B cell (primary cell): ENCODE measurements at regions of chr2 and their contacts with region 1.

Region 1: GRCh38 chr2:97935719-97936161 is 60.0 kb downstream of the TMEM131 start:
- DNase-seq: no peak
- ATAC-seq: no peak
- H3K4me3 ChIP-seq: no peak overlapping the region
- H3K4me3 Mint-ChIP-seq: peak overlapping the region; percentile 66
- H3K27ac ChIP-seq: peak overlapping the region; percentile 2 to 70
- H3K27ac Mint-ChIP-seq: peak overlapping the region; percentile 64
- H3K4me1 ChIP-seq: peaks cover 52 to 64% of the 10 kb centered on the region in 2 donors
- H3K4me1 Mint-ChIP-seq: peaks cover 91% of the 10 kb centered on the region
- H3K27me3 ChIP-seq: no peaks in the 10 kb centered on the region
- H3K27me3 Mint-ChIP-seq: no peaks in the 10 kb centered on the region
- CTCF ChIP-seq: no peak

Region 2: DNA sequence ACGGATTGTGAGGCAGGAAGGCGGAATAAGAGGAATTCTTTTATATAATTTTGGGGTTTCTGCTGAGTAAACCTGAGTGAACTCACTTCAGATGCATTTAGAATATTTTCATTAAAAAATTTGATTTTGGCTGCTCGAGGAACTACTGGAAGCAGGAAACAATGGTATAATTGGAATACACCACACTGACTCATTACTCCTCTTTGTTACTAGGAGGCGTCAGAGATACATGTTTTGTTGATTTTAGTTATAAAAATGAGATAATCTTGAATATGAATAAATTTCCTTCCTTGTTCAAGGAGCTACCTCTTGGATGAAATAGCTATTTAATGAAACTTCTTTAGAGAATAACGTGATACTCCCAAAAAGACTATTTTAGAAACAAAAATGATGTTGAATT is 725.4 kb before region 1 on chr2:
- CTCF ChIA-PET with region 1: no interaction called
- POLR2A ChIA-PET with region 1: no interaction called
- intact Hi-C with region 1: no loop called
- DNase-seq: no peak
- ATAC-seq: no peak
- H3K4me3 ChIP-seq: no peak overlapping the region
- H3K4me3 Mint-ChIP-seq: no peak overlapping the region
- H3K27ac ChIP-seq: no peak overlapping the region
- H3K27ac Mint-ChIP-seq: no peak overlapping the region
- H3K4me1 ChIP-seq: no peaks in the 10 kb centered on the region
- H3K4me1 Mint-ChIP-seq: no peaks in the 10 kb centered on the region
- H3K27me3 ChIP-seq: no peaks in the 10 kb centered on the region
- H3K27me3 Mint-ChIP-seq: no peaks in the 10 kb centered on the region
- CTCF ChIP-seq: no peak

Region 3: DNA sequence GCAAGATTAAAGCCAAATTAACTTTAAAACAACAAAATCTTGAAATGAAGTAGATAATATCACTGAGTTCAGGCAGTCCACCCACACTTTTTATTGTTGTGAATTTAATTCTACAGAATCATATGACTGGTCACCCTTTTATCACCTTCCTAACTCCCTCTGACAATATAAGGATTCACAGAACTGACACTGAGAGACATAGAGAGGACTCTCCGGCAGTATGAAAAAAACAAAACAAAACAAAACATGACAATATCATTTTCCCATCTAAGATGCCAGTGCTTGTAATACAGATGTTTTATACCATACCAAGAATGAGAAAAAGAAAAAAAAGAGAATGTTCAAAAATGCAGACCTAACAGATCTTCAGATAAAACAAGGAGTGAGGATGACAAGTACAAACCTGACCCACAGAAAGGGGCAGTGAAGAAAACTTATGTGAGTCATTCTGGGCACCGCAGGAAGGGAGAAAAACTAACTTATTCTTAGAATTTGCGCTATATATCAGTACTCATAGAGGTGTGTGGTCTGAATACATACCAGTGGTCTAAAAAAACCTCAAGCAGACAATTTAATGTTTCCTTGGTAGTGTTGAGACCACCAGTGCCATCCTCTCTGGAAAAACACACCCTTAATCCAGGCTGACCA is 85.7 kb before region 1 on chr2:
- CTCF ChIA-PET with region 1: no interaction called
- POLR2A ChIA-PET with region 1: interaction called, 4 read pairs
- intact Hi-C with region 1: loop called (anchors 5 kb)
- DNase-seq: no peak
- ATAC-seq: no peak
- H3K4me3 ChIP-seq: no peak overlapping the region
- H3K4me3 Mint-ChIP-seq: no peak overlapping the region
- H3K27ac ChIP-seq: no peak overlapping the region
- H3K27ac Mint-ChIP-seq: peak overlapping the region; percentile 29
- H3K4me1 ChIP-seq: peaks cover 3 to 14% of the 10 kb centered on the region in 2 donors
- H3K4me1 Mint-ChIP-seq: peaks cover 65% of the 10 kb centered on the region
- H3K27me3 ChIP-seq: no peaks in the 10 kb centered on the region
- H3K27me3 Mint-ChIP-seq: no peaks in the 10 kb centered on the region
- CTCF ChIP-seq: no peak

Region 4: GRCh38 chr2:97889156-97889555 is 46.6 kb before region 1 on chr2:
- CTCF ChIA-PET with region 1: no interaction called
- POLR2A ChIA-PET with region 1: no interaction called
- intact Hi-C with region 1: no loop called
- DNase-seq: no peak
- ATAC-seq: no peak
- H3K4me3 ChIP-seq: no peak overlapping the region
- H3K4me3 Mint-ChIP-seq: no peak overlapping the region
- H3K27ac ChIP-seq: no peak overlapping the region
- H3K27ac Mint-ChIP-seq: no peak overlapping the region
- H3K4me1 ChIP-seq: no peaks in the 10 kb centered on the region
- H3K4me1 Mint-ChIP-seq: no peaks in the 10 kb centered on the region
- H3K27me3 ChIP-seq: no peaks in the 10 kb centered on the region
- H3K27me3 Mint-ChIP-seq: no peaks in the 10 kb centered on the region
- CTCF ChIP-seq: no peak

Region 5: DNA sequence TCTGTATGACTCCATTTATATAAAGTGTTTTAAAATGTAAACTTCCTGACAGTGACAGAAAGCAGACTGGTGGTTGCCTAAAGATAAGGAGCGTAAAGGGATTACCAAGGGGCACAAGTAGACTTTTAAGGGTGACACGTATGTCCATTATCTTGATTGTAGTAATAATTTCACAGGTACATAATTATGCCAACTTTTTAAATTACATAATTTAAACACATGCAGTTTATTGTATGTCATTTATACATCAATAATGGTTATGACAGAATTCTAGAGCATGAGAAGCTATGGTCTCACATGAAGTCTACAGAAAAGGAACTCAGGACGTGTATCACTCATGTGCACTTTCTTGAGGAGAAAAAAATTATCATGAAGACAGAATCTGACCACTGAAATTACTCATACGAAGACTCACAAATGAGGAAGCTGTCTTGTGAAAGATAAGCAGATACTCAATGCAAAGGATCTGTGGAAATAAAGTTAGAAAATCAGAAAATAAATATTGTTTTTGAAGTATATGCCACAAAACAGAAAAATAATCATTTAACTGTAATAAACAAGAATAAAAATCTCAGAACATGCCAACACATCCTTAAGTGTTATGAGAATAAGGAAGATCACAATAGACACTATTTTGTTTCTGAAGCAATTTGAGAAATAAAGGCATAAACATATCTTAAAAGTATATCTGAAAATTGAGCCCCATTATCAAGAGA is 24.4 kb before region 1 on chr2:
- CTCF ChIA-PET with region 1: no interaction called
- POLR2A ChIA-PET with region 1: no interaction called
- intact Hi-C with region 1: loop called (anchors 2 kb)
- DNase-seq: peak; percentile 71
- ATAC-seq: peak; percentile 73
- H3K4me3 ChIP-seq: no peak overlapping the region
- H3K4me3 Mint-ChIP-seq: peak overlapping the region; percentile 17
- H3K27ac ChIP-seq: peak overlapping the region in 1 of 2 donors; percentile 37
- H3K27ac Mint-ChIP-seq: peak overlapping the region; percentile 4
- H3K4me1 ChIP-seq: peaks cover 63 to 73% of the 10 kb centered on the region in 2 donors
- H3K4me1 Mint-ChIP-seq: peaks cover 89% of the 10 kb centered on the region
- H3K27me3 ChIP-seq: no peaks in the 10 kb centered on the region
- H3K27me3 Mint-ChIP-seq: no peaks in the 10 kb centered on the region
- CTCF ChIP-seq: no peak

Region 6: GRCh38 chr2:97966518-97967215 is 30.9 kb after region 1 on chr2:
- CTCF ChIA-PET with region 1: interaction called, 3 read pairs
- POLR2A ChIA-PET with region 1: no interaction called
- intact Hi-C with region 1: loop called (anchors 5 kb)
- DNase-seq: no peak
- ATAC-seq: peak; percentile 45
- H3K4me3 ChIP-seq: no peak overlapping the region
- H3K4me3 Mint-ChIP-seq: peak overlapping the region; percentile 26
- H3K27ac ChIP-seq: peak overlapping the region in 1 of 2 donors; percentile 57
- H3K27ac Mint-ChIP-seq: peak overlapping the region; percentile 71
- H3K4me1 ChIP-seq: peaks cover 54% of the 10 kb centered on the region in 2 donors
- H3K4me1 Mint-ChIP-seq: peaks cover 86% of the 10 kb centered on the region
- H3K27me3 ChIP-seq: no peaks in the 10 kb centered on the region
- H3K27me3 Mint-ChIP-seq: no peaks in the 10 kb centered on the region
- CTCF ChIP-seq: no peak

Region 7: DNA sequence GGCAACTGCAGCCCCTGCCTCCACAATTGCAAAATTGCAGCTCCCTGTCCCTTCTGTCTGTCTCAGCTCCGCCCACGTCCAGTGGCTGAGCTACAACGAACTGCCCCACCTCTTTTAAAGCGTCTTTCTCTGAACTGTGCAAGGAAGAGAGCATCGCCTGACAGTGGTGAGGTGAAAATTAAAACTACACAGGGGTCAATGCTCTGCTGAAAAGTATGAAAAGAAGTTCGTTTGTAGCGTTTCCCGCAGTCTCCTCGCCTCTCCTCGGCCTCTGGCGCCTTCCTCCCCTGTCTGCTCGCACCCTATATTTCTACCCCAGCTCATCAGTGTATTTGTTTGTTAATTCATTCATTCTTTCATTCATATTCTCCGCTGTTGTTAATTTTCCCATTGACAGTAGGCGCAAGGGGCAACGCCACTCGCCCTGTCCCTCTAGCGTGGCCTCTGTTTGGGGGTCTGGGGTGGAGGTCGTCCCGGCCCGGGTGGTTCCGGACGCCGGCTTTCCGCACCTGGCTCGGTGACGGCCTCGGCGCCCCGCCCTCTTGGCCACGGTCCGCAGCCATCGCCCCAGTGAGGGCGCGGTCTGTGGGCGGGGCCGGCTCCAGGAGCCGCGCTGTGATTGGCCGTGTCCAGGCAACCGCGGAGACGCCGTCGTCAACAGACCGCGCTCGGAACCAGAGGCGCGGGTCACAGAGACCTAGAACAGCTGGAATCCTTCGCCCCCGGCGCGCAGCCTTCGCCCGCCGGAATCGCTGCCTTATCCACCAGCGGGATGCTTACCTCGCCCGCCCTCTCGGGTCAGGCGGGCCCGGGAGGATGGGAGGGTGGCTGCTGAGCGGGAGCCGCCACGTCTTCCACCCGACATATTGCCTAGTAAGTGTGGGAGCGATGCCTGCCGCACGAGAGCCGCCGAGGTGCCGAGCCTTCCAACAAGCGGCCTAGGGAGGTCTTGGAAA is 151.0 kb after region 1 on chr2 and contains the start of gene VWA3B:
- CTCF ChIA-PET with region 1: no interaction called
- POLR2A ChIA-PET with region 1: interaction called, 13 read pairs
- intact Hi-C with region 1: no loop called
- DNase-seq: peak; percentile 90
- ATAC-seq: peak; percentile 92
- H3K4me3 ChIP-seq: peak within 1 kb of the TSS; percentile 55 to 67 (median 57)
- H3K4me3 Mint-ChIP-seq: peak within 1 kb of the TSS; percentile 79
- H3K27ac ChIP-seq: peak within 1 kb of the TSS; percentile 33 to 54
- H3K27ac Mint-ChIP-seq: peak within 1 kb of the TSS; percentile 75
- H3K4me1 ChIP-seq: peaks cover 29 to 49% of the 10 kb centered on the region in 2 donors
- H3K4me1 Mint-ChIP-seq: peaks cover 47% of the 10 kb centered on the region
- H3K27me3 ChIP-seq: no peaks in the 10 kb centered on the region
- H3K27me3 Mint-ChIP-seq: no peaks in the 10 kb centered on the region
- CTCF ChIP-seq: no peak
- total RNA-seq, gene VWA3B: not detected in 2 replicates